WTC11 (cell line): ENCODE measurements at regions of chr11 and their contacts with region 1.

Region 1: GRCh38 chr11:123580557-123581275 is 73.7 kb downstream of the SCN3B start:
- DNase-seq: peak; percentile 91
- ATAC-seq: peak; percentile 74
- H3K4me3 Mint-ChIP-seq: peak overlapping the region; percentile 46; the same call in 1 of the 2 replicates
- H3K27ac Mint-ChIP-seq: no peak overlapping the region
- H3K4me1 Mint-ChIP-seq: peaks cover 52% of the 10 kb centered on the region
- H3K27me3 Mint-ChIP-seq: no peaks in the 10 kb centered on the region; the same call in 1 of the 2 replicates
- CTCF ChIP-seq: peak; percentile 97

Region 2: DNA sequence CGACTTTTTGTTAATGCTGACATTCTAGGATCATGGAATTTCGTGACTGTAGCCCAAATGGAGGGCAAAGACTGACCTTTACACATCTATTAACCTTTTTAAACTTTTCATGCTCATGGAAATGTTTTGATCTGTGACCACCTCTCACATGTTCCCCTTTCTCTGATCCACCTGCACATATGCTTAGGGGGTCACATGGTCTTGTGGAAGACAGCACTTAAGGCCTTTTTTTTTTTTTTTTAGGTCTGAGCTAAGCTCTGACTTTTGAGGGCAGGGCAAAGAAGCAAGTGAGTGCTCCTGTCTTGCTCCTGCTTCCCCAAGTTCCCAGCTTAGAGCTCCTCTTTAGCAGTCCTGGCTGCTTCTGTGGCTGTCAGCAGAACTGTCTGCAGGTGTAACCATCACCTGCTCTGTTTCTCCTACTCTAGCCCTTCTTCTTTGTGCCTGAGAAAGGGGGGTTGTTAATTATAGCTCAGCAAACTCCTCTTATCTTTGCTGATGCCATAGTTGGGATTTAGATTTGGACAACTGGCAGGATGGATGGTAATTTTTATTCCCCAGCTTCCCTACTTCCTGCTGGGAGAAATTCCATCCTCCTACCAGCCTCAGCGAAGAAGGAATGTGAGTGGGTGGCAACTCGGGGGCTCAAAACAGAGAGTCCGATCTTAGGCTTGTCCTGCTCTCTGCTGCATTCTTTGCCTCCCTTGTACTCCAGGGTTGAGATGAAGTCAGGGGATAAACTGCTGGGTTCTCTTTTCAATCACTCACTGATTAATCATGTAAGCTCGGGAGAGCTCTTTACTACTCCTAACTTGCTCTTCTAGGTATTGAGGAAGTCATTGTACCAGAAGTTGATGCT is 86.3 kb before region 1 on chr11:
- CTCF ChIA-PET with region 1: interaction called, 11 read pairs
- POLR2A ChIA-PET with region 1: no interaction called
- DNase-seq: no peak
- ATAC-seq: peak; percentile 65
- H3K4me3 Mint-ChIP-seq: no peak overlapping the region
- H3K27ac Mint-ChIP-seq: peak overlapping the region; percentile 64; the same call in 1 of the 2 replicates
- H3K4me1 Mint-ChIP-seq: peaks cover 31% of the 10 kb centered on the region
- H3K27me3 Mint-ChIP-seq: no peaks in the 10 kb centered on the region
- CTCF ChIP-seq: no peak

Region 3: DNA sequence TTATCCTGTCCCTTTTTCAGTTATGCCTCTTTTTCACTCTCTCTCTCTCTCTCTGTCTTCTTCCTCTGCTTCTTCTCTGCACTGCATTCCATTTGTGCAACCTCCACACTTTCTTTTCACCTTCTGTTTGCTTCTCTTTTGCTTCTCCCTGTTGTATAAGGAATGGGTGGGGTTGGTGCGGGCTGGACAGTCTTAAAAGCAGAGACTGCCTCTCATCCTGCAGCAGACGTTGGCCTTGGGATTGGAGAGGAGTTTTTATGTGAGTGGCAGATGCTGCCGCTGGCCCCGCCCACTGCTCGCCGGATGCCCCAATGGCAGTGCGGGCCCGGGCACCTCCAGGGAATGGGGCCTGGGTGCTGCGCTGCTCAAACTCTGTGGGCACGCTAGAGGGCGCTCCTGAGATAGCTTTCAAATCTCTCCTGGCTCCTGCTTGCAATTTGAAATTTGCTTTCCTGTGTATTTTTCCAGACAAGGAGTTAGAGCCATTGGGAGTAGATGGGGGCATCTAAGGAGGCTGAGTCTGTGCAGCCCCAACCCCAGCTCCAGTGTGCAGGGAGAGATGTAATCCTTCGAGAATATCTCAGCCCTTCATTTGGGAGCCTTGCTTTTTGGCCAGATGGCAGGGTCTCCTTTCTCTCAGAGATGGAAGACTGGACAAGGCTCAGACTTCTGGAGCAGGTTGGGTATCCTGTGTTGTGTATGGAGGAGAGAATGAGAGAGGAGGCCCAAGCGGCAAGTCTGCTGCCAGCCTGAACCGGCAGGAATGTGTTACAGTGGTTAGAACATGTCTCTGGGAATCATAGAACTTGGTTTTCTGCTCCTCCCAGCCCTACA is 69.5 kb before region 1 on chr11:
- CTCF ChIA-PET with region 1: interaction called, 12 read pairs
- POLR2A ChIA-PET with region 1: no interaction called
- DNase-seq: peak; percentile 95
- ATAC-seq: peak; percentile 93
- H3K4me3 Mint-ChIP-seq: peak overlapping the region; percentile 1; the same call in 1 of the 2 replicates
- H3K27ac Mint-ChIP-seq: peak overlapping the region; percentile 63
- H3K4me1 Mint-ChIP-seq: peaks cover 41% of the 10 kb centered on the region
- H3K27me3 Mint-ChIP-seq: no peaks in the 10 kb centered on the region
- CTCF ChIP-seq: peak; percentile 88

Region 4: DNA sequence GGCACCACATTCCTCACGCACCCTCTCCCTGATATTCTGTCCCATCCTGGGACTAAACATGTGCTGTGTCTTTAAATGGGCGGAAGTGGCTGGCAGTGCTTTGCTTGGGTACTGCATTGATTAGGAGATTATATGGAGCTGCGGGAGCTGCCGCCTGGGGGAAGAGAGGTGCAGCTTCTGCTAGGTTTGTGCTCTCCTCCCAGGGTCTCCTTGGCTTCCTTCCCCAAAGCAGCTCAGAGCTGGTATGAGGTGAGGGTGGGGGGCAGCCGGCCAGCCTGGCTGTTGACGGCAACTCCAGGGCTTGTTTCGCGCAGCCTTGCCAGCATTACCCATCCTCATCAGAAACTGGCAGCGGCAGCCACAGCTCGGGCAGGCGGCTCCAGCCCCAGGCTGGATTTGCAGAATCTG is 55.2 kb before region 1 on chr11:
- CTCF ChIA-PET with region 1: interaction called, 15 read pairs
- POLR2A ChIA-PET with region 1: no interaction called
- DNase-seq: no peak
- ATAC-seq: peak; percentile 74
- H3K4me3 Mint-ChIP-seq: no peak overlapping the region
- H3K27ac Mint-ChIP-seq: no peak overlapping the region
- H3K4me1 Mint-ChIP-seq: peaks cover 56% of the 10 kb centered on the region
- H3K27me3 Mint-ChIP-seq: no peaks in the 10 kb centered on the region
- CTCF ChIP-seq: no peak

Region 5: GRCh38 chr11:123601136-123601535 is 20.4 kb after region 1 on chr11:
- CTCF ChIA-PET with region 1: interaction called, 11 read pairs
- POLR2A ChIA-PET with region 1: no interaction called
- DNase-seq: no peak
- ATAC-seq: no peak
- H3K4me3 Mint-ChIP-seq: no peak overlapping the region
- H3K27ac Mint-ChIP-seq: no peak overlapping the region
- H3K4me1 Mint-ChIP-seq: no peaks in the 10 kb centered on the region
- H3K27me3 Mint-ChIP-seq: no peaks in the 10 kb centered on the region
- CTCF ChIP-seq: no peak

Region 6: DNA sequence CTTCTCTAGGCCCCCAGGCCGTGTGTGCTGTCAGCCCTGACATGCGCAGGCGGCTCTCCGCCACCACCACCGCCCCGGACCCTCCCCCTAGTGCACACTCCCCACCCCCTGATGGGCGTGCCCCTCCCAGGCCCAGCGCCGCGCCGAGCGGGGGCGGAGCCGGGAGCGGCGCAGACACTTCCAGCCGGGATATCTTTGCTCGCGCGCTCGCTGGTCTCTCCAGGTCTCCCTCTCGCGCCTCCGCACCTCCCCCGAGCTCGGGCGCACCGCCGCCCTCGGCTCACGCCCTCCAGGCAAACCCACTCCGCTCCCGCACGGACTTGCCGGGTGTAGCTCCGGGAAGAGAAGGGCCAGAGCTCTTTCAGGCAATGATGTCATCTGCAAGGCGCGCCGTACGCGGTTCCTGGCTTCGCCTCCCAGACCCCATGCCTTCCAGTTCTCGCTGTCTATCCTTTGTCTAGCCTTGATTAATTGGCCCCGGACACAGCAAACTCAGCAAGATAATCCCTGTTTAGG is 73.9 kb after region 1 on chr11 and contains the start of gene SCN3B:
- CTCF ChIA-PET with region 1: interaction called, 11 read pairs
- POLR2A ChIA-PET with region 1: no interaction called
- DNase-seq: peak; percentile 79
- ATAC-seq: peak; percentile 87
- H3K4me3 Mint-ChIP-seq: peak within 1 kb of the TSS; percentile 76
- H3K27ac Mint-ChIP-seq: no peak within 1 kb of the TSS
- H3K4me1 Mint-ChIP-seq: peaks cover 14% of the 10 kb centered on the region
- H3K27me3 Mint-ChIP-seq: peaks cover 49% of the 10 kb centered on the region
- CTCF ChIP-seq: no peak
- total RNA-seq, gene SCN3B: 0.37 to 0.79 TPM (median 0.71 TPM) in 3 replicates

Region 7: GRCh38 chr11:123698546-123699127 is 117.9 kb after region 1 on chr11:
- CTCF ChIA-PET with region 1: no interaction called
- POLR2A ChIA-PET with region 1: no interaction called
- DNase-seq: no peak
- ATAC-seq: no peak
- H3K4me3 Mint-ChIP-seq: no peak overlapping the region
- H3K27ac Mint-ChIP-seq: no peak overlapping the region
- H3K4me1 Mint-ChIP-seq: no peaks in the 10 kb centered on the region
- H3K27me3 Mint-ChIP-seq: no peaks in the 10 kb centered on the region
- CTCF ChIP-seq: no peak

Region 8: GRCh38 chr11:123924027-123924426 is 343.3 kb after region 1 on chr11:
- CTCF ChIA-PET with region 1: no interaction called
- POLR2A ChIA-PET with region 1: no interaction called
- DNase-seq: no peak
- ATAC-seq: no peak
- H3K4me3 Mint-ChIP-seq: no peak overlapping the region
- H3K27ac Mint-ChIP-seq: no peak overlapping the region
- H3K4me1 Mint-ChIP-seq: no peaks in the 10 kb centered on the region
- H3K27me3 Mint-ChIP-seq: no peaks in the 10 kb centered on the region
- CTCF ChIP-seq: no peak